PC-3 (cell line): ENCODE measurements at regions of chr2 and their contacts with region 1.

Region 1: GRCh38 chr2:7427293-7428060 is 510.3 kb downstream of the RNF144A start:
- DNase-seq: peak; percentile 84
- ATAC-seq: peak; percentile 43
- H3K4me3 ChIP-seq: no peak overlapping the region
- H3K27ac ChIP-seq: peak overlapping the region; percentile 22; the same call in 1 of the 2 replicates
- H3K4me1 ChIP-seq: no peaks in the 10 kb centered on the region
- H3K27me3 ChIP-seq: no peaks in the 10 kb centered on the region
- CTCF ChIP-seq: peak; percentile 89

Region 2: GRCh38 chr2:7203055-7203467 is 224.4 kb before region 1 on chr2:
- CTCF ChIA-PET with region 1: interaction called, 3 read pairs
- POLR2A ChIA-PET with region 1: no interaction called
- intact Hi-C with region 1: loop called (anchors 1 kb)
- DNase-seq: peak; percentile 74
- ATAC-seq: peak; percentile 76
- H3K4me3 ChIP-seq: no peak overlapping the region
- H3K27ac ChIP-seq: no peak overlapping the region
- H3K4me1 ChIP-seq: no peaks in the 10 kb centered on the region
- H3K27me3 ChIP-seq: no peaks in the 10 kb centered on the region
- CTCF ChIP-seq: peak; percentile 97

Region 3: GRCh38 chr2:7572450-7572849 is 145.0 kb after region 1 on chr2:
- CTCF ChIA-PET with region 1: no interaction called
- POLR2A ChIA-PET with region 1: no interaction called
- intact Hi-C with region 1: no loop called
- DNase-seq: no peak
- ATAC-seq: no peak
- H3K4me3 ChIP-seq: no peak overlapping the region
- H3K27ac ChIP-seq: no peak overlapping the region
- H3K4me1 ChIP-seq: no peaks in the 10 kb centered on the region
- H3K27me3 ChIP-seq: no peaks in the 10 kb centered on the region
- CTCF ChIP-seq: no peak

Region 4: GRCh38 chr2:7588295-7588694 is 160.8 kb after region 1 on chr2:
- CTCF ChIA-PET with region 1: no interaction called
- POLR2A ChIA-PET with region 1: no interaction called
- intact Hi-C with region 1: loop called (anchors 1 kb)
- DNase-seq: peak; percentile 30
- ATAC-seq: peak; percentile 43
- H3K4me3 ChIP-seq: no peak overlapping the region
- H3K27ac ChIP-seq: no peak overlapping the region
- H3K4me1 ChIP-seq: no peaks in the 10 kb centered on the region
- H3K27me3 ChIP-seq: no peaks in the 10 kb centered on the region
- CTCF ChIP-seq: no peak

Region 5: DNA sequence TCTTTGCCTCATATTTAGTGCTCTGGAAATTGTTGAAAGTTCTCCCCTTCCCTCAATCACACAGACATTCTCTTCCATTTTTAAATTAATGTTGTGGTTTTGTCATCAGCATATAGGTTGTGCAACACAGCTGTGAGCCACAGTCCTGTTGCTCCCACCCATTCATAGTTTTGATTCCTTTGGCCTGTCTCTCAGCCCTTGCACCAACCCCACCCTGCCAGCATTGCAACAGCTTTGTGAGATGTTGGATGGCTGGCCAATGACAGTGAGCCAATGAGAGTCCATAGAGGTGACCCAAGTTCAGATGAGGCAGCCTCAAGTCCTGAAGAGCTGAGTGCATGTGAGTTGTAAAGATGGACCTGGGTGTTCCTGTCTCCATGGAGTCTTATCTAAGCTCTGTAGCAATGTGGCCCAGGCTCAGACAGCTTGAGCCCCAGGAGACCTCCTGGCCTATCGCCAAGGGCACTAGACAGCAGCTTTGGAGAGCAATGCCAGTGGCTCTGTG is 265.2 kb after region 1 on chr2:
- CTCF ChIA-PET with region 1: no interaction called
- POLR2A ChIA-PET with region 1: no interaction called
- intact Hi-C with region 1: loop called (anchors 1 kb)
- DNase-seq: peak; percentile 60
- ATAC-seq: no peak
- H3K4me3 ChIP-seq: no peak overlapping the region
- H3K27ac ChIP-seq: peak overlapping the region; percentile 46
- H3K4me1 ChIP-seq: peaks cover 24% of the 10 kb centered on the region
- H3K27me3 ChIP-seq: no peaks in the 10 kb centered on the region
- CTCF ChIP-seq: no peak

Region 6: DNA sequence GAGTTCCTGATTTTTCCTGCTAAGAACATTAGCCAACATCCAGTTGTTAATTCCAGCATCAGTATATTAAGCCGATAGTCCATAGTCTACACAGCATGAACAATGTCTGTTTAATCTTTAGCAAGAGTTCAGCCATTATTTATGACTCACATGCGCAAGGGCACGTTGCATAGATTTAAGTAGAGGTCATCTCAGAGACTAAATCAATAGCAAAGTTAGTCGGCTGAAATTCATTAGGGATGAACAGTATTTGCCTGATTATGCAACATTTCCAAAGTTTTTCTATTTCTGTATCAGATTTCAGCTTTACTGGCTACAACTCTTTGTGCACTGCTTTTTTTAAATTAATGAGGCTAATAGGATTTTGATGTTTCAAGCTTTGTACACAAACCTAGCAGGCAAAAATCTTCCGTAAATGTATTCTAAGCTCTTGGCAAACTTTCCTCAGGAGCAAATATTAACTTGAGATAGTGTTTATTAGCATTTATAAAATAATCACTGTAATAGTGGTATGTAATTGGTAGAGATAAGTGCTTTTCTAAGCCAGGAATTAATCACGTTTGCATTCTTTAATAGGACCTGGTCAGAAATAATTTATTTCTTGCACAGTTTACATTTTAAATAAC is 675.7 kb after region 1 on chr2:
- CTCF ChIA-PET with region 1: no interaction called
- POLR2A ChIA-PET with region 1: no interaction called
- intact Hi-C with region 1: loop called (anchors 10 kb)
- DNase-seq: peak; percentile 71
- ATAC-seq: peak; percentile 50; the same call in 1 of the 2 replicates
- H3K4me3 ChIP-seq: no peak overlapping the region
- H3K27ac ChIP-seq: no peak overlapping the region
- H3K4me1 ChIP-seq: peaks cover 12% of the 10 kb centered on the region
- H3K27me3 ChIP-seq: no peaks in the 10 kb centered on the region
- CTCF ChIP-seq: no peak